Activated CD4-positive, alpha-beta memory T cell treated with anti-CD3 and anti-CD28 coated beads for 36 hours (primary cell): ENCODE measurements at regions of chr7 and their contacts with region 1.

Region 1: DNA sequence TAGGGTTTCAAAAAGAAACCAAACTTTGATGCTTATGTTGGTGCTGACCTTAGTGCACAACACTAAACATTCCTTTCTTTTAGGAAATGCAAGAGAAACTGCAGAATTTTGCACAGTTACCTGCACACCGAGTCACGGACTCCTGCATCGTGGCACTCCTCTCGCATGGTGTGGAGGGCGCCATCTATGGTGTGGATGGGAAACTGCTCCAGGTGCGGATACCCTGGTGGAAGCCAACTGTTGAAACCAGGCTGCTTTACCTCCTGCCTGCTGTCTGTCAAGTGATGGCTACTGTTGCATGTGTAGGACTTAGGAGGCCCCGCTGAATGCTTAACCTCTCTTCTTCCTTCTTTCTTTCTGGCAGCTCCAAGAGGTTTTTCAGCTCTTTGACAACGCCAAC is 11.7 kb downstream of the CASP2 start:
- DNase-seq: peak; percentile 68
- H3K4me3 Mint-ChIP-seq: no peak overlapping the region
- H3K27ac Mint-ChIP-seq: no peak overlapping the region
- H3K4me1 Mint-ChIP-seq: peaks cover 50% of the 10 kb centered on the region
- H3K27me3 Mint-ChIP-seq: no peaks in the 10 kb centered on the region

Region 2: DNA sequence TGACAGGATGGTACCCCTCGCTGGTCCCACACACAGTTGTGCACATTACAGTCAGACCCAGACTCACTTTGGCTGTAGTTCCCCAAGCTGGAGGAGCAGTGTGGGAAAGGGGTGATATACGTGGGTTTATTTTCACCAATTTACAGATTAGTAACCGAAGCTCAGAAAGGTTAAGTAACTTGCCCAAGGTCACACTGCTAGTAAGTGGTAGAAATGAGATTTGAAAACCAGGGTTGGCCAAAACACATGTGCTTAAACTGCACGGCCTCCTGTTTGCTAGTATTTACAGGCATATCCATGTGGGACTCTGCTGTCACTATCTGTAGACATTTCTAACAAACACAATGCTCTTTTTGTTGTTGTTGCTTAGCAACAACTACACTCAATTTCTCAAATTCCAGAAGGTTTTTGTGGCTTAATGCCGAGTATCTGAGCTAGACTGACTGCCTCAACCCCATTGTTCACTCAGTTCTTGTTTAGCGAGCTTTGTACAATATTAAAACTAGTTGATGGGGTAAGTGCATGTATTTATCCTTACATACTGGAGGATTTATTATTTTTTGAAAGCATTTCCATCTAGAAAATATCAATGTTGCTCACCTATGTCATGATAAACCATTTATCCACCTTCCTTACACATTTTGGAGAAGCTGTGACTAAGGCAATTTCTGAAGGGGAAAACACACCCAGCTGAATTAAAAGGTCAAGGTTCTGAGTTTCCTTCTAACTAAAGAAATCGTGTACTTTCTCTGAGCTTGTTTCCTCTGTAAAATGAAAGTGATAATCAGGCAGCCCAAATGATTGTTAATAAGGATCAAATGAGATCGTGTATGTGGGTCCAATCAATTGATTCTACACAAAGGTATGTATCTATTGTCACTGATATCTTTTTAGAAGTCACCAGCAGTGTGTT is 20.4 kb before region 1 on chr7:
- CTCF ChIA-PET with region 1: interaction called, 12 read pairs
- POLR2A ChIA-PET with region 1: no interaction called
- intact Hi-C with region 1: no loop called
- DNase-seq: no peak
- H3K4me3 Mint-ChIP-seq: peak overlapping the region; percentile 51
- H3K27ac Mint-ChIP-seq: peak overlapping the region; percentile 87
- H3K4me1 Mint-ChIP-seq: peaks cover 40% of the 10 kb centered on the region
- H3K27me3 Mint-ChIP-seq: no peaks in the 10 kb centered on the region

Region 3: GRCh38 chr7:143287935-143288826 is 11.7 kb before region 1 on chr7 and contains the start of gene CASP2:
- CTCF ChIA-PET with region 1: interaction called, 15 read pairs
- POLR2A ChIA-PET with region 1: interaction called, 7 read pairs
- intact Hi-C with region 1: no loop called
- DNase-seq: peak; percentile 99
- H3K4me3 Mint-ChIP-seq: peak within 1 kb of the TSS; percentile 93
- H3K27ac Mint-ChIP-seq: peak within 1 kb of the TSS; percentile 97
- H3K4me1 Mint-ChIP-seq: peaks cover 44% of the 10 kb centered on the region
- H3K27me3 Mint-ChIP-seq: no peaks in the 10 kb centered on the region
- total RNA-seq, gene CASP2: 117 to 129 TPM

Region 4: DNA sequence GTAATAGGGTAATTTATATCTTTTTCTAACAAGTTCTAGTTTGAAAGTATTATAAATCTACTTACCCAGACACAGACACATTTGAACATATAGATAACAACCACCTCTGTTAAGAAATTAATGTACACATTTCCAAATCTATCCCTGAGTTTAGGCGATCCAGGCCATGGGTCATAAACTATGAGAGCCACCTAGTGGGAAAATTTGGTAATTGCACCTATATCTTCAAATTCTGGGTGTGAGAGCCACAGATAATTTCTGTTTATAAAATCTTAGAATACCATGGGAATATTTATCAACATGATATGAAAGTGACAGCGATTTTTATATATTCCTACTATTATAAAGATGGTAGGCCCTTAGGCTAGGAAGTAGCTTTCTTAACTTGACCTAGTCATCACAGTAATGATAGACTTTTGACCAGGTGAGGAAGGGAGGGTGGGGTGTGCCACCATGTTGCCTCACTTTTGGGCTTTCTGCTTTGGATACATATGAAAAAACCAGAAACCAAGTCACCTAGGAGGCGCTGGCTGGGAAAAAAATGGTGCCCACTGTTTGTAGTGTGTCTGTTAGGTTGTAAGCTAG is 116.8 kb after region 1 on chr7:
- CTCF ChIA-PET with region 1: interaction called, 10 read pairs
- POLR2A ChIA-PET with region 1: no interaction called
- intact Hi-C with region 1: no loop called
- DNase-seq: no peak
- H3K4me3 Mint-ChIP-seq: no peak overlapping the region
- H3K27ac Mint-ChIP-seq: no peak overlapping the region
- H3K4me1 Mint-ChIP-seq: peaks cover 6% of the 10 kb centered on the region
- H3K27me3 Mint-ChIP-seq: no peaks in the 10 kb centered on the region